B cell (primary cell): ENCODE measurements at regions of chr11 and their contacts with region 1.

Region 1: GRCh38 chr11:24738972-24739371 is 242.1 kb downstream of the LUZP2 start:
- DNase-seq: no peak
- ATAC-seq: no peak
- H3K4me3 ChIP-seq: no peak overlapping the region
- H3K4me3 Mint-ChIP-seq: no peak overlapping the region
- H3K27ac ChIP-seq: no peak overlapping the region
- H3K27ac Mint-ChIP-seq: no peak overlapping the region
- H3K4me1 ChIP-seq: peaks cover 0 to 5% of the 10 kb centered on the region in 2 donors
- H3K4me1 Mint-ChIP-seq: peaks cover 5% of the 10 kb centered on the region
- H3K27me3 ChIP-seq: no peaks in the 10 kb centered on the region
- H3K27me3 Mint-ChIP-seq: no peaks in the 10 kb centered on the region
- CTCF ChIP-seq: no peak

Region 2: DNA sequence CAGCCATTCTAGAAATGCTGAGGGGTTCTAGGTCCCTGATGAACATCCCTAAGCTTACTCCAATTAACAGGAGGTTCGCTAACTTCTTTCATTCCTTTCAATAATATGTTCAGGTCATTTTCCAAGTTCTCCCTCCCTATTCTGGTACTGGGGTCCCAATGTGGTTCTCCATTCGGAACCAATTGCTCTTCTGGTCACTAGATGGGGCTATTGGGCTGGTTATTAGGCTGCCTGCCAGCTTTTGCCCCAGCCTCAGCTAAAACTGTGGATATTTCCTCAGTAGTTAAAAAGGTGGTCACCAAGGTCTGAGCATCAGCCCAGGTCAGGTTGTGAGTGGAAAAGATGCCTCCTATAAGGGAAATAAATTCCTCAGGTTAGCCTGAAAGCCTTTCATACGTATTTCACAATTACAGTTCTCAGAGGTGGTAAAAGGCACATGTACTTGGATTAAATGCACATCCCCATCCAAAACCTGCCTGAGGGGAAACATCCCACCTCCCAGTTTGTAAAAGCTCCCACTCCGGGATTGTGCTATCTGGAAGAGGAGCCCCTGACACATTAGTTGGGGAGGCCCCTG is 1717.6 kb before region 1 on chr11:
- CTCF ChIA-PET with region 1: no interaction called
- POLR2A ChIA-PET with region 1: no interaction called
- intact Hi-C with region 1: no loop called
- DNase-seq: no peak
- ATAC-seq: no peak
- H3K4me3 ChIP-seq: no peak overlapping the region
- H3K4me3 Mint-ChIP-seq: no peak overlapping the region
- H3K27ac ChIP-seq: no peak overlapping the region
- H3K27ac Mint-ChIP-seq: no peak overlapping the region
- H3K4me1 ChIP-seq: no peaks in the 10 kb centered on the region
- H3K4me1 Mint-ChIP-seq: no peaks in the 10 kb centered on the region
- H3K27me3 ChIP-seq: no peaks in the 10 kb centered on the region
- H3K27me3 Mint-ChIP-seq: no peaks in the 10 kb centered on the region
- CTCF ChIP-seq: peak; percentile 56

Region 3: DNA sequence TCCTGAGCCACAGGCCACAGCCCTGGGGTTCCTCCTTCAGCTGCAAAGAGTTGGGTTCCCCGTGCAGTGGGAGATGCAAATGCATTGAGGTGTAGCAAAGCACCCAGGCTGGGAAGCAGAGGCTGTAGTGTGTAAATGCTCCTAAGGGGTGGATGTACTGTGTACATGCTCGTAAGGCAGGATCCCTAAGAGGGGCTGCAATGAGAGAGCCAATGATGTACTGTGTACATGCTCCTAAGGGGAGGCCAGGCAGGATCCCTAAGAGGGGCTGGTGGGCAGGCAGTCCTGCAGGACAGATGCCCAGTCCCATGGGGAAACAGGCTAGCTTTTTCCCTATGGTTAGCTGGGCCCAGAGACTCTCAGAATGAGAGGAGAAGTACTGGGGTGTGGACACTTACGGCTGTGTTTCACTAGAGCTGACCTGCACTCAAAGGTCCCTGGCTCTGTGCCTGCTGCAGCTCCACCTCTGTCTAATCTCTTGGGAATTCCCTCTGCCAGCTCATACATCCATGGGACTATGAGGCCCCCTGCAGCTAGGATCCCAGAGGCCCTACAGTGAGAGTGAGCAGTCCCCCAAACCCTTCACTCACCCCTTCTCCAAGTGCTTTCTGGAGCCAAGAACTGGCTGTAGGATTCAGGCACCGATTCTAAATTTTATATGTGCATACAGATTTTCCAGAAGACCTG is 504.0 kb before region 1 on chr11:
- CTCF ChIA-PET with region 1: no interaction called
- POLR2A ChIA-PET with region 1: no interaction called
- intact Hi-C with region 1: no loop called
- DNase-seq: no peak
- ATAC-seq: no peak
- H3K4me3 ChIP-seq: no peak overlapping the region
- H3K4me3 Mint-ChIP-seq: no peak overlapping the region
- H3K27ac ChIP-seq: no peak overlapping the region
- H3K27ac Mint-ChIP-seq: no peak overlapping the region
- H3K4me1 ChIP-seq: no peaks in the 10 kb centered on the region
- H3K4me1 Mint-ChIP-seq: no peaks in the 10 kb centered on the region
- H3K27me3 ChIP-seq: no peaks in the 10 kb centered on the region
- H3K27me3 Mint-ChIP-seq: no peaks in the 10 kb centered on the region
- CTCF ChIP-seq: no peak

Region 4: GRCh38 chr11:24760681-24761080 is 21.7 kb after region 1 on chr11:
- CTCF ChIA-PET with region 1: no interaction called
- POLR2A ChIA-PET with region 1: no interaction called
- intact Hi-C with region 1: loop called (anchors 1 kb)
- DNase-seq: no peak
- ATAC-seq: no peak
- H3K4me3 ChIP-seq: no peak overlapping the region
- H3K4me3 Mint-ChIP-seq: no peak overlapping the region
- H3K27ac ChIP-seq: no peak overlapping the region
- H3K27ac Mint-ChIP-seq: no peak overlapping the region
- H3K4me1 ChIP-seq: peaks cover 0 to 3% of the 10 kb centered on the region in 2 donors
- H3K4me1 Mint-ChIP-seq: peaks cover 3% of the 10 kb centered on the region
- H3K27me3 ChIP-seq: no peaks in the 10 kb centered on the region
- H3K27me3 Mint-ChIP-seq: no peaks in the 10 kb centered on the region
- CTCF ChIP-seq: no peak

Region 5: DNA sequence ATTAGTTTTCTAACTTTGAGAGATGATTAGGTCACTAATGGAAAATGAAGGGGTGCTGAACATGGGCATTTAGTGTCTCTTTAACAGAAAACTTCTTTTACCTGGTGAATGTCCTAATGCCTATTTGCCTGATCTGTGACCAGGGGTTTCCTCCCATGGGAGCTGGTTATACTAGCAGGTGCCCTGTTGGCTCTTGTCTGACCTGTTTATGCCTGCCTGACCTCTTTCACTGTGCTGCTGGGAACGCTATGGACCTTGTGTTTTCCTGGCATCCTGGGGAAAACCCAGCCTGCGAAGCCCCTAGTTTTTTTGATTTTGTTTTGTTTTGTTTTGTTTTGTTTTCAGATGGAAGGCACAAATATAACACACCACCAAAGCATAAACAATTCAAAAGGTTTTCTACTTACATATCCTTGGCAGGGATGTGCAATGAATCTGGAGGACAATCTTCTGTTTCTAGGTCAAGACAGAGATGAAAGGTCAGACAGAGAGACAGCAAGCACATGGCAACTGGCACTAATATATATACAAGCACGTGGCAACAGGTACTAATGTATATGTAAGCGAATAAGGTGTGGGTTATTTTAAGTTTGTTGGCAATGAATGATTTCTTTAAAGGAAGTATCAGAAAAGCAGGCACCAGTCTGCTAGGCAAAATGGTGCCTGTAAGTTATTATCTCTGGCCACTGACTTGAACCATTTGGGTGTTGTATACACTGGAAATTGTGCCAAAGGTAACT is 148.1 kb after region 1 on chr11:
- CTCF ChIA-PET with region 1: no interaction called
- POLR2A ChIA-PET with region 1: no interaction called
- intact Hi-C with region 1: no loop called
- DNase-seq: no peak
- ATAC-seq: no peak
- H3K4me3 ChIP-seq: no peak overlapping the region
- H3K4me3 Mint-ChIP-seq: no peak overlapping the region
- H3K27ac ChIP-seq: no peak overlapping the region
- H3K27ac Mint-ChIP-seq: no peak overlapping the region
- H3K4me1 ChIP-seq: no peaks in the 10 kb centered on the region
- H3K4me1 Mint-ChIP-seq: no peaks in the 10 kb centered on the region
- H3K27me3 ChIP-seq: no peaks in the 10 kb centered on the region
- H3K27me3 Mint-ChIP-seq: no peaks in the 10 kb centered on the region
- CTCF ChIP-seq: no peak

Region 6: GRCh38 chr11:25052844-25053243 is 313.9 kb after region 1 on chr11:
- CTCF ChIA-PET with region 1: no interaction called
- POLR2A ChIA-PET with region 1: no interaction called
- intact Hi-C with region 1: no loop called
- DNase-seq: no peak
- ATAC-seq: no peak
- H3K4me3 ChIP-seq: no peak overlapping the region
- H3K4me3 Mint-ChIP-seq: no peak overlapping the region
- H3K27ac ChIP-seq: no peak overlapping the region
- H3K27ac Mint-ChIP-seq: no peak overlapping the region
- H3K4me1 ChIP-seq: no peaks in the 10 kb centered on the region
- H3K4me1 Mint-ChIP-seq: no peaks in the 10 kb centered on the region
- H3K27me3 ChIP-seq: no peaks in the 10 kb centered on the region
- H3K27me3 Mint-ChIP-seq: no peaks in the 10 kb centered on the region
- CTCF ChIP-seq: no peak